Left colon (tissue), 2 donors: ENCODE measurements at regions of chr1 and their contacts with region 1.

Region 1: DNA sequence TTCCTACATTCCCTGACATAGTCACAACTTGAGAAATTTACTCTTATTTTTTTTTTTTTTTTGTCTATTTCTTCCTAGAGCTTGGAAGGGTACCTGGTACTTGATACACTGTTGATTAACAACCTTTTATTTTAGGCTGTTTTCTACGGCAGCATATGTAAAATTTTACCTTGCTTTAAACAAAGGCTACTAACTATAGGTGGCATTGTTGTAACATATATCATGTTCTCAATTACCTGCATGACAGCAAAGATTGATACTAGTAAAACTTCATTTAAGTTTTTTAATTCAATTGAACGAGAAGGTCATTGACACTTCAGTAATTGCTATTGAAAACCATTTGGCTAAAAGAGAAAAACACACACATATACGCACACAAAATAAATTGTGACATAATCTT is 238.3 kb upstream of the ESRRG start:
- DNase-seq: no peak
- ATAC-seq: no peak

Region 2: GRCh38 chr1:217230412-217230811 is 268.9 kb after region 1 on chr1:
- intact Hi-C with region 1: no loop called
- DNase-seq: no peak
- ATAC-seq: no peak

Region 3: DNA sequence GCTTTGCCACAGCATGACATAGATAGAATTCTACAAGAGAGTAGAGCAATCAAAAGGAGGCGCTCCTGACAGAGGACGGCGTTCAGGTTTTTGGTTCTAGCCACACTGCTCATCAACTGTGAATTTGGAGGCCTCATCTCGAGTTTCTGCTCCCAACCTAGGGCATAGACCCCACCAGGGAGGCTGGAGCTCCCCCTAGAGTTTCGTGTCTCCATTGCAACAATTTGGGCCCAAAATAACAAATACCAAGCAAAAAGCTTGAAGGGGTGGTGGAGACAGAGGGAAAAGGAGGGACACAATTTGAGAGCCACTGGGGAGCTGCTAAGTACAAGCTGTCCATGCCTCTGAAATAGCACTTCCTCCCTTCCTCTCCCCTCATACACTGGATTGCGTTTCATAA is 372.4 kb after region 1 on chr1:
- intact Hi-C with region 1: loop called in 1 of 2 experiments (anchors 5 kb)
- DNase-seq: peak in 1 of 2 donors; percentile 5
- ATAC-seq: no peak